Cardiac septum (tissue), 1 donor: ENCODE measurements at regions of chr3 and their contacts with region 1.

Region 1: GRCh38 chr3:141853081-141853601 is 23.3 kb upstream of the ATP1B3 start:
- DNase-seq: no peak

Region 2: GRCh38 chr3:141594357-141594756 is 258.8 kb before region 1 on chr3:
- intact Hi-C with region 1: no loop called
- DNase-seq: no peak

Region 3: GRCh38 chr3:141710573-141711251 is 142.4 kb before region 1 on chr3:
- intact Hi-C with region 1: no loop called
- DNase-seq: no peak

Region 4: DNA sequence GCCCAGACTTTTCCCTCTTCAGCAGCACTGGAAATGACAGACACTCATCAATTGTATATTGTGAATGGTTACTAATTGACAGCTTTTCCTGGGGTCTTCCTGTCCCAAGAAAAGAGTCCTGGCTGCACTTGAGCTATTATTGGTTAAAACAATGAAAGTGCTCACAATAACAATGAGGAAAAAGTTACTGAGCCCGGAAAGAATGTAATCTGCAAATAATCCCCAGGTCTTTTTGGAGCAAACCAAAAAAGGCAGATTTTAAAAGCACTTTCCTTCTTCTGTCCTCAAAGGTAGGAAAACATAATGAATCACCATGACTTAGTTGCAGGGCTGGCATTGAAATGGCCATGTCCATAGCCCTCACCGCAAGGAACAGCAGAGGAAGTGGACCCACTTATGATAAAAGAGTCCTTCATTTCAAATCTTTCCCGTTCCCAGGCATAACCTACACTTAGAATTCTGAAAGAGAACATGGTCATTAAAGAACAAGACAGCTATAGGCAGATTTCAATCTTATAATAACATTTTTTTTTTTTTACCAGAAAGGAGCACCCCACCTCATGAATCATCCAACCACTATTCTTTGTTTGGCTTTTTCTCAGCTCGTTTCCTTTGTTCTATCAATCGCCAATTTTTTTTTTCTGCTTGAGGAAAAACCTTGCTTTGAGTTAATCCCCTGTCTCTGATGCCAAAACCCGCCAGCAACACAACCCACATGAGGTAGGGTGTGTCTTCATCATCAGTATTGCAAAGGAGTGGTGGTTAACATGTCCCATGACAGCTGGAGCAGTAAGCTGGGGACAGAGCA is 12.2 kb before region 1 on chr3:
- intact Hi-C with region 1: loop called (anchors 1 kb)
- DNase-seq: no peak